ENCODE measurements at regions of chr4 and their contacts with region 1.

Region 1: DNA sequence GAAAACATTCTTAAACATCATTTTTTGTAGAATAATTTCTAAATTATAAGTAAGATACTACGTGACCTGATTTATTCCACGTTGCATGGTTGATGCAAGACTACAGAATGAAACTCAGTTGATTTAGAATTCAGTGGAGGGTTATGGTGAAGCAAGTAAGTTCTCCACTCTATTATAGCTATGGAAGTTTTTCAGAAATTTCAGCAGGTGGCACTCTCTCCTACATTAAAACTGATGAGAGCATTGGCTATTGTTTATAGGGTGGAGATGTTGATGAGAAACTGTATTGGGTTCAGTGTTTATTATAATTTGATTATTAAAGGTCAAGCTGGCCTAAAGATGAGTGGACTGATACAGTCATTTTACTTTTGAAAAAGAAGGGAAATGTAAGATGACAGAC is 88.0 kb downstream of the FNIP2 start:
- DNase-seq: no peak
- ATAC-seq: peak; percentile 74
- H3K4me3 Mint-ChIP-seq: no peak overlapping the region
- H3K27ac Mint-ChIP-seq: no peak overlapping the region
- H3K4me1 Mint-ChIP-seq: peaks cover 4% of the 10 kb centered on the region
- H3K27me3 Mint-ChIP-seq: no peaks in the 10 kb centered on the region

Region 2: DNA sequence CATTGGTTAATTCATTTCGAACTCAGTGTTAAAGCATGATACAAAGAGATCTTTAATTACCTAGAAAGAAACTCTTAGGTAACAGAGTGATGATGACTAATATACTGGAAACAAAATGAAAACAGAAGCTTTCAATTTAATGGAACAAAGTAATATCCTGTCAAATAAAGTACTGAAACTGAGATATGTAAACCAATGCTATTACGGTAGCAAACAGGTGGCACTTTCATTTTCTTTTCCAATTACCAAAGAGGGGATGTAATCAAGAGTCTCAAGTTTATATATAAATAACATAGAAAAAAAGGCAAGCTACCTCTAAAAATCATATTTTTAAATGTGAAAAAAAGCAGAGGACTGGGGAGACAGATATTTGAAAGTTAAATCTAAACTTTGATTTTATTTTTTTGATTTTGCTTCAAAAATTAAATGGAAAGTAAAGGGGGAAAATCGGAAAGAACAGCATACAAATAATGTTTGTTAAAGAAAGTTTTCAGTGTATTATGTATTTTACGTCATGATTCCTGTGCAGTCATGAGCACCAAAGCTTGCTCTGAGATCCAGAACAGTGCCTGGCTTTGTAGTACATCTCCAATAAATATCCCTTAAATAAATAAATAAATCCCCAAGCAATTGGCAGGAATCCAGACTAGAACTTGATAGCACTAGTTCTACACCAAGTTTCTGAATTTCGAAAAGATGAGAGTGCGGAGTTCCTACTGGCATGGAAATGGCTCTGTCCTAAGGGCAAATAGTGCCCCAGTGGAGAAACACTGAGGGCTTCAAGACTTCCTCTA is 221.0 kb after region 1 on chr4:
- CTCF ChIA-PET with region 1: no interaction called
- POLR2A ChIA-PET with region 1: no interaction called
- DNase-seq: no peak
- ATAC-seq: peak; percentile 80
- H3K4me3 Mint-ChIP-seq: peak overlapping the region; percentile 50
- H3K27ac Mint-ChIP-seq: no peak overlapping the region
- H3K4me1 Mint-ChIP-seq: peaks cover 16% of the 10 kb centered on the region
- H3K27me3 Mint-ChIP-seq: no peaks in the 10 kb centered on the region

Region 3: DNA sequence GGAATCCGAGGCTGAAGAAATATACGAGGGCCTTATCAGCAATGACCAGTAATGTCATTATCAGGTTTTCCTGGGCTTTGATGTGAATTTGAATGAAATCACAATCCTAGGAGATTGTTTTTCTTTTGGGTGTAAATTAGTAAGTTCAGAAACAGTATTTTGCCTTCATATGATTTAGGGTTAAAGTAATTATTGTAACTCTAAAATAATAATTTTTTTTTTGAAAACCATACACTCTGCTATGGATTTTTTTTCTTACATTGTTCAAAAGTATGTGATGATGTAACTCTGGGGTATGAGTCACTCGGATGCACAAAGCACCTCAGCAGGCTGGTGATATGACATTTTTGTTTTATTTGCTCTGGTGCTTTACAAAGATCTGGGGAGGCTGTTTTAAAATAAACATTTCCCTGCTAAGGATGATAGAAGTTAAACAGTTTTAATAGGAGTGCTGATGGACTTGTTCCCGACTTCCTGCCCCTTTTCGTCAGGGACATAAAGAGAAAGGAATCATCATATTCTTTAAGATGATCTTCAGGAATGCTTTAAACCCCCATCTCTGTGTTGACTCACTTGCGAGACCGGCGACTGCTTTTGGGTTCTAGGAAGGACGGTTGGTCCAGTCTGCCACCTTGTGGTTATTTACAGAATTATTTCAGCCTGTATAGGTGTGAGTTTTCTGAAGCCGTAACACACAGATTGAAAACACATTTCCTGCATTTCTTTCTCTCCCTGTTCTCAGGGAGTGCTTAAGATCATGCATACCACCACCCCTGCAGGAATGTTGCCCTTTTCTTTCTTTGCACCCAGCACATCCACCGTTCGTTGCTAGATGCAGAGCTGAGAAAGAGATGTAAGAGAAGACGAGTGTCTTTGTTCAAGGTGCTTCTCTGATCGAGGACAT is 318.5 kb after region 1 on chr4:
- CTCF ChIA-PET with region 1: interaction called, 16 read pairs
- POLR2A ChIA-PET with region 1: no interaction called
- DNase-seq: peak; percentile 71
- ATAC-seq: peak; percentile 87
- H3K4me3 Mint-ChIP-seq: no peak overlapping the region
- H3K27ac Mint-ChIP-seq: no peak overlapping the region
- H3K4me1 Mint-ChIP-seq: peaks cover 33% of the 10 kb centered on the region
- H3K27me3 Mint-ChIP-seq: peaks cover 3% of the 10 kb centered on the region

Region 4: GRCh38 chr4:159201168-159201567 is 344.3 kb after region 1 on chr4:
- CTCF ChIA-PET with region 1: interaction called, 38 read pairs
- POLR2A ChIA-PET with region 1: no interaction called
- DNase-seq: no peak
- ATAC-seq: no peak
- H3K4me3 Mint-ChIP-seq: no peak overlapping the region
- H3K27ac Mint-ChIP-seq: no peak overlapping the region
- H3K4me1 Mint-ChIP-seq: peaks cover 16% of the 10 kb centered on the region
- H3K27me3 Mint-ChIP-seq: no peaks in the 10 kb centered on the region

Measured in activated CD8-positive, alpha-beta T cell treated with anti-CD3 and anti-CD28 coated beads, Interleukin-2, amount 10 ng/mL, durations not matched to agents 7 days and 5 days (primary cell).